ENCODE measurements at regions of chr11 and their contacts with region 1.

Region 1: DNA sequence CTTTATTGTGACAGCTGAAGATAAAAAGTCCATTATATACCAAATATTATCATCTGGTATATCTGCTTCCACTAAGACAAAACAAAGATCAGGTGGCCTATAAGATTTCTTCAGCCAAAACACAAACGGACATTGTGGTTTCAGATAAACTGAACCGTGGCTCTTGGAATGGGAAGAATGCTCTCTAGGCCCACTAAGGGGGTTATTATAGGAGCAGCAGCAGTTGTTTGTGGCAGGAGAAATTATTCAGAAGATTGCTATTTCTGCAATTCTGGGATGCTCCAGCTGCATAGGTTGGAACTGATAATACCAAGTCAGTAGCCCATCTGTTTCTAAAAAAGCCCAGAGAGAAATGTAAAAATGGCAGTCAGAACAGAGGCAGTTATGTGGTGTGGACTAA is 145.3 kb downstream of the NCAM1 start:
- DNase-seq: no peak
- ATAC-seq: no peak
- H3K4me3 ChIP-seq: no peak overlapping the region
- H3K27ac ChIP-seq: peak overlapping the region in 10 of 12 donors; percentile 14 to 85 (median 71)
- H3K4me1 ChIP-seq: peaks cover 0 to 43% (median 8%) of the 10 kb centered on the region in 12 donors
- H3K27me3 ChIP-seq: no peaks in the 10 kb centered on the region
- CTCF ChIP-seq: no peak
- POLR2A ChIP-seq: no peak

Region 2: GRCh38 chr11:112968941-112969713 is 137.4 kb before region 1 on chr11:
- intact Hi-C with region 1: loop called in 7 of 10 experiments (anchors 5 to 10 kb)
- DNase-seq: no peak
- ATAC-seq: peak in 1 of 4 donors; percentile 38
- H3K4me3 ChIP-seq: no peak overlapping the region
- H3K27ac ChIP-seq: peak overlapping the region in 4 of 12 donors; percentile 1 to 27 (median 16)
- H3K4me1 ChIP-seq: peaks cover 0 to 72% (median 11%) of the 10 kb centered on the region in 12 donors
- H3K27me3 ChIP-seq: peaks cover 0 to 14% (median 0%) of the 10 kb centered on the region in 9 donors
- CTCF ChIP-seq: no peak
- POLR2A ChIP-seq: no peak